ENCODE measurements at regions of chr16 and their contacts with region 1.

Region 1: DNA sequence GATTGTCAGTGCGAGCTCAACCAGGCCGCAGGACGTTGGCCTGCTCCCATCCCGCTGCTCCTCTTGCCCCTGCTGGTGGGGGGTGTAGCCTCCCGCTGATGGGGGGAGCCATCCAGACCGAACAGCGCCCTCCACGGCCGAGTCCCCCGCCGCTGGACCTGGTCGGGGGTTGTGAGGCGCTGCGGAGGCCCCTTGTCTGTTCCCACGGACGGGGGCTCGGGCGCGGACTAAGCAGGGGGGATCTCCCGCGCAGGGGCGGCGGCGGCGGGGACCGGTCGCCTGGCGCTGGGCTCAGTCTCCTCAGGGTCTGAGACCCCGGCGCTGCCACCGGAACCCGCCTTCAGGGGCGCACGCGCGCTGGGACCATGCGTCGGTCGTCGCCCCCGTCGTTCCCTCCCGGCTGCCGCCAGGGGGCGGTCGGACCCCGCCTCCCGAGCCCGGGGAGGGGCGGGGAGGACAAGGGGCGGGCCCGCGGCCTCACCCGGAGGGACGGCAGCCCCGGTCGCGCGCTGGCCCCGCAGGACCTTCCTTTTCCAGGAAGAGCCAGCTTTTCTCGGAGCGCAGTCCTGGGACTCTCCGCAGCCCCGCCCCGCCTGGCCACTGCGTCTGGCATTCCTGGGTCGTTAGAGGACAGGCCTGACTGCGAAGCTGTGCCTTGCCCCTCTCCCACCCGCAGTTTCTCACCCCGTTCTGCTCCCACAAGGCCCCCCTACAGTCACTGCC is 6.3 kb upstream of the IL32 start:
- DNase-seq: peak; percentile 92 to 94
- ATAC-seq: peak; percentile 93 to 96 (median 94)
- H3K4me3 ChIP-seq: peak overlapping the region; percentile 46 to 95 (median 86)
- H3K27ac ChIP-seq: peak overlapping the region; percentile 14 to 97 (median 90)
- H3K4me1 ChIP-seq: peaks cover 7 to 71% (median 22%) of the 10 kb centered on the region in 9 donors
- H3K27me3 ChIP-seq: no peaks in the 10 kb centered on the region
- CTCF ChIP-seq: peak; percentile 92 to 99 (median 96)

Region 2: GRCh38 chr16:3087243-3088235 is 28.4 kb after region 1 on chr16:
- intact Hi-C with region 1: loop called in 3 of 10 experiments (anchors 1 to 2 kb)
- DNase-seq: peak; percentile 60 to 66
- ATAC-seq: peak; percentile 77 to 89 (median 82)
- H3K4me3 ChIP-seq: peak overlapping the region in 9 of 10 donors; percentile 18 to 60 (median 53)
- H3K27ac ChIP-seq: peak overlapping the region; percentile 82 to 96 (median 88)
- H3K4me1 ChIP-seq: peaks cover 0 to 42% (median 38%) of the 10 kb centered on the region in 9 donors
- H3K27me3 ChIP-seq: peaks cover 0 to 6% (median 0%) of the 10 kb centered on the region in 7 donors
- CTCF ChIP-seq: peak in 6 of 9 donors; percentile 2 to 49 (median 40)

Region 3: DNA sequence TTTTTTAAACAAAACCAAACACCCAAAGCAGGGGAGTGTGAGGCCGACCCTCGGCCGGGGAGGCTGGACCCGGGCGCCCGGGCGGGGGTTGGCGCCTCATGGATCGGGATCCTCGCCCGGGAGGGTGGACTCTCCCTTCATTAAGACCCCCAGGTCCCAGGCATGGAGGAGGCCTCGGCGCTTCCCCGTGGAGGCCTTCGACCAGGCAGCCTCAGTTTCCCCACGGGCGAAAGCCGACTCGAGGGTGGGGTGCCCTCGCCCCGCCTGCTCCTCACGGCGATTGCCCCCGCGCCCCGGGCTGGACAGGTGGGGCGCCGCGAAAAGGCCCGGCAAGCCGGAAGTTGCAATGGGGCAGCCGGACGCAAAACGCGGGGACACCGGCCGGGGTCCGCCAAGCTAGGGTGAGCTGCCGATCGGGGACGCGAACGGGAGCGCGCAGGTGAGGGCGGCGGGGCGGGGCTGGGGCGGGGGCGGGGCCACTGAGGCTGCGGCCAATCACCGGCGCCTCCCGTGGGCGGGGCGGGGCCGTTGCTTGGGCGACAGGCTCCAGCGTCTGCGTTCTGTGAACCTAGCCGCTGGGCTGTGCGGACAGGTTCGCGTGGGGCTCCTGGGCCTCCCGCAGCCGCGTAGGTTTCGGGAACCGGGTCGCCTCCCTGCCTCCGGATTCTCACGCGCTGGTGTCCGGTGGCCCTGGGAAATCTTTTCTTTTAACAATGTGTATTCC is 47.2 kb after region 1 on chr16:
- intact Hi-C with region 1: loop called in 4 of 10 experiments (anchors 5 to 10 kb)
- DNase-seq: peak; percentile 89 to 90
- ATAC-seq: peak; percentile 91 to 97 (median 94)
- H3K4me3 ChIP-seq: peak overlapping the region; percentile 40 to 79 (median 66)
- H3K27ac ChIP-seq: peak overlapping the region; percentile 63 to 97 (median 86)
- H3K4me1 ChIP-seq: peaks cover 6 to 38% (median 32%) of the 10 kb centered on the region in 9 donors
- H3K27me3 ChIP-seq: no peaks in the 10 kb centered on the region
- CTCF ChIP-seq: peak in 1 of 9 donors; percentile 6

Region 4: DNA sequence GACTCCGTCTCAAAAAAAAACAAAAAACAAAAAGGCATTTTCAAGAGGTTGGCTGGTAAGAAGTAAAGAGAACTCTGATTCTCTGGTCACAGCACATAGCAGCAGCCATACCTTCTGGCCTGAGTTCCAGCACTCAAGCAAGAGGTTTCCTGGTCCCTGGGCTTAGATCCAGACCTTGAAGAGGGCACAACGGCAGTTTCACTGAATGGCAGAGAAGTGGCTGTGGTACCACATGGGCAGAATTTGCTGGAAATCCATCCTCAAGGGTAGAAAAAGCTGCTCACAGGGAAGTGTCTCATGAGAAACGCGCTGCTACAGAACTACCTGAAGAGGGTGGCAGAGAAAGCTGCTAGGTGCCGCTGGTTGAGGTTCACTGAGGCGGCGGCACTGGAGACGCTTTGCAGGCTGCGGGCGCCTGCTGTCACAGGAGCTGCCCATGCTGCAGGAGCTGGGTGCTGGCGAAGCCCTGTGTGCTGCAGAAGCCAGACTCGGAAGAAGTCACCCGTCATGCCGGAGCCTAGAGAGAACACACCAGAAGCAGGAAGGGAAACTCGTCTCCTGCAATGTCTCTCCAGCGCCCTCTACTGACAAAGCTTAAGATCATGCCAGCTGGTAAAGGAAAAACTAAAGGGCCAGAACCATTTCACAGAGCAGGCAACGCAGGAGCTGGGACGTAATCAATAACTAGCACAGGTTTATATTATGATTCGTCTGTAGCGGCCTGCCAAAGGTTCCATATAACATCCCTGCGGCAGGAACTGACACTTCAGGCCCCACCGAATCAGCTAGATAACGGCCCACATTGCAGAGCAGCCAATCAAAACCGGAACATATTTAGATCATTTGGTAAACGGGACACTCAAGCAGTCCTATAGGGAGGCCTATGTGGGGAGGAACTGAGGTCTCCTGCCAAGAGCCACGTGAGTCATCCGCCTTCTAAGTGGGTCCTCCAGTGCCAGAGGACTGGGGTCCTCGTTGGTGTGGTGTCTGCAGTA is 70.3 kb after region 1 on chr16:
- intact Hi-C with region 1: loop called in 9 of 10 experiments (anchors 1 to 5 kb)
- DNase-seq: peak; percentile 62 to 84
- ATAC-seq: peak; percentile 68 to 81 (median 79)
- H3K4me3 ChIP-seq: peak overlapping the region in 9 of 10 donors; percentile 27 to 66 (median 59)
- H3K27ac ChIP-seq: peak overlapping the region in 9 of 10 donors; percentile 57 to 92 (median 80)
- H3K4me1 ChIP-seq: peaks cover 3 to 51% (median 38%) of the 10 kb centered on the region in 9 donors
- H3K27me3 ChIP-seq: no peaks in the 10 kb centered on the region
- CTCF ChIP-seq: peak; percentile 81 to 96 (median 94)

Region 5: DNA sequence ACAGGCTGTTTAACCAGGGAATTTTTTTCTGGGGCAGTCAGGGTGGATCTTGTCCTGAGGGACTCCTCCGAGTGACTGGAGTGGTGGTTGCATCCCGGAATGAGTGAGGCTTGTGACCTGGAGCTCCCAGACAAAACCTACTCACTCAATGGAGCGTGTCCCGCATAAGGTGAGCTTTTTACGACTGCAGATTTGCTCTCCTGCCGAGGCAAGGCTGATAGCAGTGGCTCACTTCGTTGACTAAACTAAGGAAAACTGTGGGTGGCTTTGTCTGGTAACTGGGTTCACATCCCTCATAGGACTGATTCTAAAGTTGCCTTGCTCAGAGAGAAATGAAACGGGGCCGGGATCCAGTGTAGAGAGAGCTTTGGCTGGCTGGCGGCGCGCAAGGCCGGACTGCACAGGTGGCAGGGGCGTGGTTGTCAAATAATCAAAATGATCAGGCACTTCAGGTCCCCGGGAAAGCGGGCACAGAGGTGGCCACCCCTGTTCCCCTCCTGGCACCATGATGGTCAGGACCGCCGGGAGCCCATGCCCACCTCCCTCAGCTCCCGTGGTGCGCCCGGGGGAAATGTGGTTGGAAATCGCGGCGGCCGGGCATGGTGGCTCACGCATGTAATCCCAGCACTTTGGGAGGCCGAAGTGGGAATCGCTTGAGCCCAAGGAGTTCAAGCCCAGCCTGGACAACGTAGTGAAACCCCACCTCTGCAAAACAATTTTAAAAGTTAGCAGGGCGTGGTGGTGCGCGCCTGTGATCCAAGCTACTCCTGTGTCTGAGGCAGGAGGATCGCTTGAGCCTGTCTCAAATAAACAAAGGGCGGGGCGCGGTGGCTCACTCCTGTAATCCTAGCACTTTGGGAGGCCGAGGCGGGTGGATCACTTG is 102.2 kb after region 1 on chr16:
- intact Hi-C with region 1: loop called in 6 of 10 experiments (anchors 2 to 10 kb)
- DNase-seq: no peak
- ATAC-seq: no peak
- H3K4me3 ChIP-seq: no peak overlapping the region
- H3K27ac ChIP-seq: no peak overlapping the region
- H3K4me1 ChIP-seq: peaks cover 2 to 32% (median 28%) of the 10 kb centered on the region in 9 donors
- H3K27me3 ChIP-seq: peaks cover 0 to 7% (median 0%) of the 10 kb centered on the region in 7 donors
- CTCF ChIP-seq: no peak

Measured in heart right ventricle (tissue), 16 donors.